Naive thymus-derived CD8-positive, alpha-beta T cell (primary cell): ENCODE measurements at regions of chr12 and their contacts with region 1.

Region 1: DNA sequence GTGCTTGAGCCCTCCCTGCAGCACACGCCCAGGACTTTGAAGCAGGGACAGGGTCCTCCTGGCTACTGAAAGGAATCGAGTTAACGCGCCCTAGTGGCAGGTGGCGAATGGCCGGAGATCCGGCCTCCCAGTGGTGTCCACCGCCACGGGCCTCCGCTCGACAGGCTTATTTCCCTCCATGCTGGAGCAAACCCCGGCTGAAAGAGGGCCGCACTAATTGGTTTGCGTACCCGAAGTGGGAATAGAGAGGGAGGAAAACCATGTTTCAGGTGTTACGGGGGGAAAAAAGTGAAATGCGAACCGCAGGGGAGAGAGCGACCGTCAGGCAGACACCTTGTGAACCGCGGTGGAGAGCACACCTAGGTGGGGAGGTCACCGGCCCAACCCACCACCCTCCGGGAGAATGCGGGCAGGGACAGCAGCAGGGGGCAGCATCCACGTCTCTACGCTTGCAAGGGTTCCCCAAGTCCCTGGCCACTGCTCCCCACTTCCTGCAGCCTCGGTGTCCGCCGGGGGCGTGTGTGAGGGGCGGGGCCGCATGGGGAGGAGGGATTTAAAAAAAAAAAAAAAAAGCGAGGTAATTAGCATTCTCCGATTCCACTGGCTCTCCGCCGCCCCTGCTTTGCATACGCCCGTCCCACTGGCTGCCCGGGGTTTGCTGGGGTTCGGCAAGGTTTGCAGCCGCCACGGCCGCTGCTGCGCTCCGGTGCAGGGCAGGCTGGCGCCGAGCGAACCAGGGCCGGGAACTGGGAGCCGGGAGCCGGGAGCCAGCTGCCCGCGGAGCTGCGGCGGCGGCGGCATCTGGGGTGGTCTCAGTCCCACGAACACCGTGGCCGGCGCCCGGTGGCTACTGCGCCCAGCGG is 224.6 kb upstream of the CRY1 start:
- DNase-seq: peak; percentile 77 to 96 (median 87)
- ATAC-seq: peak; percentile 51 to 59
- H3K4me3 Mint-ChIP-seq: peak overlapping the region; percentile 83 to 91 (median 87)
- H3K27ac Mint-ChIP-seq: peak overlapping the region; percentile 28 to 94 (median 83)
- H3K4me1 Mint-ChIP-seq: peaks cover 29 to 41% (median 36%) of the 10 kb centered on the region in 4 donors
- H3K27me3 Mint-ChIP-seq: peaks cover 0 to 4% (median 0%) of the 10 kb centered on the region in 5 donors

Region 2: DNA sequence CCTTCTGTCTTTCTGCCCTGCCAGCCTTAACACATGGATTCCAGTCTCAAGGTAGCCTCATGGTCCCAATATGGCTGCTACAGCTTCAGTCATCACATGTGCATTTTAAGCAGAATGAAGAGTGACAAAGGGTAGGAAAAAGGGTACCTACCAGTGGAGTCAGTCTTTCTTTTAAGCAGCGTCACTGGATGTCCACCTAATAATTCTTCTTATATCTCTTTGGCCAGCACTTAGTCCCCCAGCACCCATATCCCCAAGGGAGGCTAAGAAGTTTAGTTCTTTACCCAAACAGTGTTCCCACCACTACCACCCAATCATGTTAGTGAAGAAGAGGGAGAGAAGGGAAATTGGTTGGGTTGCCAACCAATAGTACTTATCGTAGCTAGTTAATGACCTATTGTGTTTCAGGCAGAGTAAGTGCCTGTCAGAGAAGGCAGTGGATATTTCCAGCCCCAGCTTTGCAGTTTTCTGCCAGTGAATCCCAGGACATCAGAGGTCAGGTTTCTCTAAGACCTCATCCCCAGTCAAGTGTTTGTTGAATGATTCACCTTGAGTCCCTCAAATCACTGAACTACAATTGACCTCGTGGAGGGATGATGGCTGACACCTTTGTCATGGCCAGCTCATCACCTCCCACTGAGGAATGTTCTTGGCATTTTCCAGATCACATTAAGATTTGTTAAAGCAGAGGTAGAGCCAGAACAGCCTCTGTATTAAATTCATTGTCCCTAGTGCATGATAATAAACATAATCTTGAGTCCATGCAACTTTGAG is 26.2 kb after region 1 on chr12:
- POLR2A ChIA-PET with region 1: interaction called, 10 read pairs
- DNase-seq: no peak
- ATAC-seq: no peak
- H3K4me3 Mint-ChIP-seq: no peak overlapping the region
- H3K27ac Mint-ChIP-seq: peak overlapping the region in 8 of 10 donors; percentile 3 to 77 (median 59)
- H3K4me1 Mint-ChIP-seq: peaks cover 42 to 78% (median 55%) of the 10 kb centered on the region in 4 donors
- H3K27me3 Mint-ChIP-seq: no peaks in the 10 kb centered on the region

Region 3: GRCh38 chr12:107356266-107356936 is 38.4 kb after region 1 on chr12:
- POLR2A ChIA-PET with region 1: interaction called, 16 read pairs
- DNase-seq: no peak
- ATAC-seq: no peak
- H3K4me3 Mint-ChIP-seq: no peak overlapping the region
- H3K27ac Mint-ChIP-seq: peak overlapping the region in 2 of 10 donors; percentile 6 to 14
- H3K4me1 Mint-ChIP-seq: peaks cover 48 to 79% (median 64%) of the 10 kb centered on the region in 4 donors
- H3K27me3 Mint-ChIP-seq: no peaks in the 10 kb centered on the region

Region 4: DNA sequence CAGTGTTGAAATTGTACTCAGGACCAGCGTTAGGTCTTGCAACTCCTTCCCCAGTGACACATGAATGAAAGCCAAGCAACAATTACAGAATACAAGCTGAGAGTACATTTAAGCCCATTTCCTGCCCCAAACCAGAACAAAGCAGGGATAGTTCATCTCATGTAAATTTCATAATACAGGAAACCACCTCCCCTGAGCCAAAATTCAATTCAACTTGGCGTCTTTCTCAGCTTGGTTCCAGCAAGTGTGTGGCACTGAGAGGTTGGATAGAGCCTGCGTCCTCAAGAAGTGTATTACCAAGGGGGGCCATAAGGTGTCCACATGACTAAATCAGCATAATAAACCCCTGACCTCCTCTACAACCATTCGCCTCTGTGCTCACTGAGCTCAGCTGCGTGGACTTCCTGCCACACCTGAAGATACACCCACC is 54.3 kb after region 1 on chr12:
- POLR2A ChIA-PET with region 1: interaction called, 140 read pairs
- DNase-seq: peak in 8 of 10 donors; percentile 10 to 77 (median 56)
- ATAC-seq: peak; percentile 73 to 80
- H3K4me3 Mint-ChIP-seq: peak overlapping the region; percentile 39 to 84 (median 76)
- H3K27ac Mint-ChIP-seq: peak overlapping the region; percentile 82 to 97 (median 92)
- H3K4me1 Mint-ChIP-seq: peaks cover 51 to 88% (median 82%) of the 10 kb centered on the region in 4 donors
- H3K27me3 Mint-ChIP-seq: no peaks in the 10 kb centered on the region

Region 5: DNA sequence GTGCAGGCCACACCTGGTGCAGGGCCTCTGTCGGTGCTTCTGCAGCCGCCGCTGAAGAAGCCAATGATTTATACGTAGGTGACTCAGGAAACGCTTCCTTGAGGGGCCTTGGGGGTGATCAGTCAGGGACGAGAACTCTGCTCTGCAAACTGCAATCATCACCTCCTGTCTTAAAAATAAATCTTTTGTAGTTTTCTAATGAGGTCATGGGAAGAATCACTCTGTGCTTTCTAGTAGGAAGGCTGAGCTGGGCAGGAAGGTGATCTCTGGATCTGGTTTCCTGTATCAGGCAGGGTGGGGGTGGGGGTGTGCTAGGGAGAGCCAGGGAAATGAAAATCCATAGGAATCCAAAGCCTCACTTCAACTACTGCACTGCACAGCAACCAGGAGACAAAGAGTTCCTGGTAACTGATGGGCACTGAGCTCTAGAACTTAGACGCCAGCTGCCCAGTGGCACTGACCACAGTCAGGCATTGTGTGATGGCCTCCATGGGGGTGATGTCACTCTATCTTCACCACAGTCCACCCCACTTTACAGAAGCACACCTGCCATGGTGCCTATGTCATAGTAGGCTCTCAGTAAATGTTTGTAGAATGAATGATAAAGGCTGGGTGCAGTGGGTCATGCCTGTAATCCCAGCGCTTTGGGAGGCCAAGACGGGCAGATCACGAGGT is 75.2 kb after region 1 on chr12:
- POLR2A ChIA-PET with region 1: interaction called, 80 read pairs
- DNase-seq: peak in 6 of 10 donors; percentile 17 to 63 (median 53)
- ATAC-seq: peak; percentile 75 to 90
- H3K4me3 Mint-ChIP-seq: peak overlapping the region; percentile 25 to 84 (median 62)
- H3K27ac Mint-ChIP-seq: peak overlapping the region; percentile 81 to 94 (median 90)
- H3K4me1 Mint-ChIP-seq: peaks cover 58 to 100% (median 79%) of the 10 kb centered on the region in 4 donors
- H3K27me3 Mint-ChIP-seq: no peaks in the 10 kb centered on the region

Region 6: DNA sequence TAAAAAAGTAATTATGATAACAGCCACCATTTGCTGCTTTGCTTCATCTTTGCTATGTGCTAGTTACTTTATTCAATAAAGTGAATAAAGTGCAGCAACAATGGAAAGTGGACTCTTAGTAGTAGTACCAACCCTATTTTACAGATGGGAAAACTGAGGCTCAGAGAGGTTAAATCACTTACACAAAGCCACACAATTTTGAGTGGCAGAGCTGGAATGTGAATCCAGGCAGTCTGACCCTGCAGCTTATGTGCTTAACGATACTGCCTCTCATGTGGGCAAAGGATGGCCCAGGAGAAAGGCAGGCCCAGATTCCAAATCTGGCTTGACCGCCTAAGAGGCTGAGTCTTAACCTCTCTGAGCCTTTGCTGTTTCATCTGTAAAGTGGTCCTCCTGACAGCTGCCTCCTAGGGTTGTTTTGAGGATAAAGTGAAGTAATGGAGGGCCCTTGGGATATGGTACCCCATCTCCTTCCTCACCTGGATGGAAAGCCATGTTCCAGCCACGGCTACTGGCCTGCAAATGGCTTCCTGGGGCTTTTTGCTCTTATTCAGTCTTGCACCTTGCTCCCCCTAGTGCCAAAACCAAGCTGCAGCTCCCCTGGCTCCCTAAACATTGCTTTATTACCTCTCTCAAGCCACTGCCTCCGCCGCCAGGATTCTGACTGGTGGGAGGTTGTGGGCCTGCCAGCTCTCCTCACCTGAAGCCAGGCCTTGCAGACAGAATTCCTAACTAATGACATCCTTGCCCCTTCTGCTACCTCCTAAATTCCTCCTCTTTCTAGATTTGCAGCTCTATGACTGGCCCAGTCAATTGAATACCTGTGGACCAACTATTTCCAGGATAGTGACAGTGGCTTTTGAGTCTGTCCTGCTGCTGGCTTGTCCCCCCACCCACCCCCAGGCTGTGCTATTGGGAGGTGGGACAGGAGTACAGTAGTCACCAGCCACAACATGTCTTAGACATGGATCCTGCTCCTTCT is 84.3 kb after region 1 on chr12:
- POLR2A ChIA-PET with region 1: interaction called, 80 read pairs
- DNase-seq: peak; percentile 15 to 77 (median 57)
- ATAC-seq: peak; percentile 77 to 78
- H3K4me3 Mint-ChIP-seq: peak overlapping the region in 3 of 10 donors; percentile 26 to 53 (median 45)
- H3K27ac Mint-ChIP-seq: peak overlapping the region in 6 of 10 donors; percentile 55 to 89 (median 86)
- H3K4me1 Mint-ChIP-seq: peaks cover 30 to 57% (median 42%) of the 10 kb centered on the region in 4 donors
- H3K27me3 Mint-ChIP-seq: no peaks in the 10 kb centered on the region